Thyroid gland (tissue), 4 donors: ENCODE measurements at regions of chr12 and their contacts with region 1.

Region 1: DNA sequence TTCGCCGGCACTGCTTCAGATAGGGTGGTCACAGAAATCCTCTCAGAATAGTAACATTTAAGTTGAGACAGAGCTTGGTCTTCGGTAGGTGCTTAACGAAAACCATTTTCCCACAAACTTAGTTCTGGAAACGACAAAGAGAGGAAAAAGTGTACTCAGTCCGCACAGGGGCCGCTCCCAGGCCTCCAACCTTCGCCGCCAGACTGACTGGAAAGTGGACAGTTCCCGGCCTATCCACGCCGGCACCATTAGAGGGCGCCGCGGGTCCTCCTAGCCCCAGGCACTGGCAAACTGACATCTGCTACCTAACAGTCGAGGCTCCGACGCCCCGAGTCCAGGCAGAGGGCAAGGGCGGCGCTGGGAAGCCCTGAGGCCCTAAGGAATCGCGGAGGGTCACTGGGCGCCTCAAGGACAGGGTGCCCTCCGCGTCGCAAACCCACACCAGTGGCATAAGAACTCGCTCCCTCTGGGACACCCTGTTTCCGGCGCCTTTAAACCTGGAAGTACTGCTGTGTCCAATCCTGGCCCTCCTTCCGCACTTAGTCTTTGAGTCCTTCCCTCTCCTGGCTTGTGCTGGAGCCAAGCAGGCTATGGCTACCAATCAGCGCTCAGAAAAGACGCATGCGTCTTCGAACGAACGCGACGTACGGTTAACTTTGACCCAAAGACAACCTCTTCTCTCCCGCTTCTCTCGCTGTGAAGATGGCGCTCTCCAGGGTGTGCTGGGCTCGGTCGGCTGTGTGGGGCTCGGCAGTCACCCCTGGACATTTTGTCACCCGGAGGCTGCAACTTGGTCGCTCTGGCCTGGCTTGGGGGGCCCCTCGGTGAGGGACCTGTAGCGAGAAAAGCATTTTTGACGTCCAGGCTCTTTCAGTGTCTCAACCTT is at the start of gene LETMD1:
- DNase-seq: peak; percentile 96
- H3K4me3 ChIP-seq: peak within 1 kb of the TSS; percentile 29 to 74 (median 64)
- H3K27ac ChIP-seq: peak within 1 kb of the TSS; percentile 87 to 95 (median 95)
- H3K4me1 ChIP-seq: peaks cover 16 to 18% of the 10 kb centered on the region in 2 donors
- H3K27me3 ChIP-seq: no peaks in the 10 kb centered on the region
- CTCF ChIP-seq: peak; percentile 67 to 95 (median 90)
- POLR2A ChIP-seq: peak in 1 of 2 donors; percentile 88
- total RNA-seq, gene LETMD1: 62.9 to 106 (median 86.7) TPM

Region 2: DNA sequence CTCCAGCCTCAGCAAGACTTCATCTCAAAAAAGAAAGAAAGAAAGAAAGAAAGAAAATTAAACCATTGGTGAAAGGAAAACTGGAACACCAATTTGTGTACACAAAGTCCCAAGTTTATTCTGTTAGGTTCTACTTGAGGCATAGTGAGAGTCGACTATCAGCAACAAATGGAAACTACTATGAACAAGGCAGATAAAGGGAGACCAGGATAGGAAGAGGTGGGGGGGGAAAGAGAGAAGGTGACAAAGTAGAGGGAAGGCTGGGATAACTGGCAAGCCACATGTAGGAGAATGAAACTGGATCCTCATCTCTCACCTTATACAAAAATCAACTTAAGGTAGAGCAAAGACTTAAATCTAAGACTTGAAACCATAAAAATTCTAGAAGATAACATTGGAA is 99.4 kb after region 1 on chr12:
- intact Hi-C with region 1: no loop called
- DNase-seq: no peak
- H3K4me3 ChIP-seq: no peak overlapping the region
- H3K27ac ChIP-seq: no peak overlapping the region
- H3K4me1 ChIP-seq: no peaks in the 10 kb centered on the region
- H3K27me3 ChIP-seq: no peaks in the 10 kb centered on the region
- CTCF ChIP-seq: no peak
- POLR2A ChIP-seq: no peak

Region 3: GRCh38 chr12:51172515-51173431 is 124.9 kb after region 1 on chr12 and contains the start of gene TFCP2:
- intact Hi-C with region 1: no loop called
- DNase-seq: peak; percentile 98
- H3K4me3 ChIP-seq: peak within 1 kb of the TSS; percentile 39 to 54 (median 47)
- H3K27ac ChIP-seq: peak within 1 kb of the TSS; percentile 96 to 99 (median 97)
- H3K4me1 ChIP-seq: peaks cover 13 to 23% of the 10 kb centered on the region in 2 donors
- H3K27me3 ChIP-seq: no peaks in the 10 kb centered on the region
- CTCF ChIP-seq: peak in 1 of 6 experiments; percentile 8
- POLR2A ChIP-seq: peak in 1 of 2 donors; percentile 80
- total RNA-seq, gene TFCP2: 14.9 to 22.6 (median 21.3) TPM

Region 4: DNA sequence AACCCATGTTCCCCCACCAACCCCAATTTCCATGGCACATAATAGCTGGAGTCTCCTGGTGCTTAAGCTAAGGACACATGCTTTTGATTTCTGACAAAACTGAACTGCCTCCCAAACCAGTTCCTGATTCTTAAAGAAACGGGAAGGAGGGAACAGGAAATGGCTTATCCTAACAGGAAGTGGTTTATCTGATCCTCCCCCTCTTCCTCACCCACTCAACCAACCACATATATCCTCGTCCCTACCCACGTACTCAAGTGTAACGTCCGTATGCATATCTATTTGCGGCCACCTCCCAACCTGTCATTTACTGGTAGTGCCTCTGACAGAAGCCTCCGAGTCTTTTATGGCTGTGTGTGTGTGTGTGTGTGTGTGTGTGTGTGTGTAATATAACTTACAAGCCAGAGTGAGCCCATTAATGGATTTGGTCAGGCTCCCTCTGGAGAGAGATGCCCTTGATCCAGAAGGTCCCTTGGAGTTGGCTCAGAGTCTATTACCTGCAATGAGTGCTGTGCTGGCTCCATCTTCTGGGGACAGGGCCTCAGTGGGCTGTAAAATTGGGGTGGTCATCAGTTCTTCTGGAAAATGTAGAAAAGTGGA is 198.5 kb after region 1 on chr12:
- intact Hi-C with region 1: loop called (anchors 10 kb)
- DNase-seq: no peak
- H3K4me3 ChIP-seq: no peak overlapping the region
- H3K27ac ChIP-seq: peak overlapping the region in 1 of 3 donors; percentile 12
- H3K4me1 ChIP-seq: peaks cover 11 to 13% of the 10 kb centered on the region in 2 donors
- H3K27me3 ChIP-seq: no peaks in the 10 kb centered on the region
- CTCF ChIP-seq: peak in 1 of 6 experiments; percentile 18
- POLR2A ChIP-seq: no peak